MCF 10A (cell line): ENCODE measurements at regions of chr11 and their contacts with region 1.

Region 1: DNA sequence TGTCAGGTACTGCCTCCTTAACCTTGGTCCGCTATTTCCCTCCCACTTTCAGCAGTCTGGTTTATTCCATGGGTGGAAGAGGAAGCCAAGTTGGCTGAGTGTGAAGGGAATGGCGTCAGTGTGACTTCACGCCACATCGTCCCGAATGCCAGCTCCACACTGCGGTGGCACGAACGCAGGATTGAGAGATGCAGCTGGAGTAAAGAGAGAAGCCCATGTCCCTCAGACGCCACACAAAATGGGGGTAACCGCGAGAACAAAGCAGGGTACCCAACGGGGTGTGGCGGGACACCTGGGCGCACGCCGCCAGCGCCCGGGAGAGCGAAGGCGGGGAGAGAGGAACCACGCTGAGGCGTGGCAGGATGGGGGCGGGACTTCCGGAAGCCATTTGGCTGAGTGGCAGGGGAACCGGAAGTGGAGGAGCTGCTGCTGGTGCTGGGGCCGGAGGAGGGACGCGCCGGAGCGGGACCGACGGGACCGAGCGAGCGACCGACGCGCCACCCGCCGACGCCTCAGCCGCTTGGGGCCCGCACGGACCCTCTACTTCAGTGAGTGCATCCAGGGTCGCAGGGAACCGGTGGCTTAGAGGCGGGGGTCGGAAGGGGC is at the start of gene PAFAH1B2:
- DNase-seq: peak; percentile 94
- H3K4me3 Mint-ChIP-seq: peak within 1 kb of the TSS; percentile 96
- H3K27ac Mint-ChIP-seq: peak within 1 kb of the TSS; percentile 82
- H3K4me1 Mint-ChIP-seq: peaks cover 11% of the 10 kb centered on the region
- H3K27me3 Mint-ChIP-seq: no peaks in the 10 kb centered on the region
- CTCF ChIP-seq: no peak
- total RNA-seq, gene PAFAH1B2: 146 and 174 TPM in 2 replicates

Region 2: DNA sequence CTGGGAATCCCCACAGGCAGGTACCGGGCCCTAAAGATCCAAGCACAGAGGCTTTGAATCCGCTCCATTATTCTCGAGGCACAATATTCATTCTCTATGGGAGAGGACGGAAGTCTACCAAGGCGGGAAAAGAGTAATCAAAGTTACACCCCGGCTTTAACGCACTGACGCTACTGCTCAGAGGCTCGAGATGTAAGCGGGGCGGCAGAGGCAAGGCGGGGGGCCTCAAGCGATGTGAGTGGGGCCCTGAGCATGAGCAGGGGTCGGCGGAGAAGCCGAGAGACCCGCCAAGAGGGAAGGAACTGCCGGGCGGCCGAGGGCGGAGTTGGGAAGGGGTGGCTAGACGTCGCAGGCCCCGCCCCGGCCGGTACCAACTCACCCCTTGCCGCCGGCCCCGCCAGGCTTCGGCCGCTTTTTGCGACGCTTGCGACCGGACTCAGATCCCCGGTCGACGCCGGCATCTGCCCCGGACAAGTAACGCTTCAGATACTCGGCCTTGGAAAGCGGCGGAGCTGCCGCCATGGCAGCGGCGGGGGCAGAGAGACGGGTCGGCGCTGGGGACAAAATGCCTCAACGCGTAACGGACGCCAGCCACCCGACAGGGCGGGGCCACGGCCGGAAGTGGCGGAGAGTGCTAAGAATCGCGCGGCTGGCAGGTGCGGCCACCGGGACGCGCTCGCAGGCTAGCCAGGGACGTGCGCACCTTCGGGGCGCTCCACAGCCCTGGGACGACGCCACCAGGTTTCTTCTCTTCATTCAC is 371.4 kb before region 1 on chr11 and contains the start of gene BUD13:
- CTCF ChIA-PET with region 1: interaction called, 3 read pairs
- POLR2A ChIA-PET with region 1: interaction called, 17 read pairs
- intact Hi-C with region 1: no loop called
- DNase-seq: peak; percentile 86
- H3K4me3 Mint-ChIP-seq: peak within 1 kb of the TSS; percentile 97
- H3K27ac Mint-ChIP-seq: peak within 1 kb of the TSS; percentile 98
- H3K4me1 Mint-ChIP-seq: peaks cover 25% of the 10 kb centered on the region
- H3K27me3 Mint-ChIP-seq: no peaks in the 10 kb centered on the region
- CTCF ChIP-seq: no peak
- total RNA-seq, gene BUD13: 11.8 and 15.1 TPM in 2 replicates

Region 3: GRCh38 chr11:117072517-117073461 is 71.2 kb before region 1 on chr11:
- CTCF ChIA-PET with region 1: no interaction called
- POLR2A ChIA-PET with region 1: interaction called, 14 read pairs
- intact Hi-C with region 1: no loop called
- DNase-seq: peak; percentile 92
- H3K4me3 Mint-ChIP-seq: no peak overlapping the region
- H3K27ac Mint-ChIP-seq: no peak overlapping the region
- H3K4me1 Mint-ChIP-seq: peaks cover 26% of the 10 kb centered on the region
- H3K27me3 Mint-ChIP-seq: no peaks in the 10 kb centered on the region
- CTCF ChIP-seq: no peak

Region 4: DNA sequence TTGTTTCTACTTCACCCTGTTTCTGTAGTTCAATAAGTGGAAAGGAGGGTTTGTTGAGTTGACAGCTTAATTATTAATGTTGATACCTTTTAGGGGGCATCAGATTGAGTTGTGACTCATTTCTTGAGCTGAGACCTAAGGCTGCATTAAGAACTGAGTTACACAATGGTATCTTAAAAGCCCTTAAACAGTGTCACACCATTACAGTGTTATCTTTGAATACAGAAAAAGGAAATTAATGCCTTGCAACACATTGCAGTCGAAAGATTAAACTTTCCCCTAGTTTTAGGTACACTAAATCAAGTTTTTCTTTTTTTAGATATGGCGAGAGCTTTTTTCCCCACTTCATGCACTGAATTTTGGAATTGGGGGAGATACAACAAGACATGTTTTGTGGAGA is 16.9 kb after region 1 on chr11:
- CTCF ChIA-PET with region 1: interaction called, 6 read pairs
- POLR2A ChIA-PET with region 1: interaction called, 27 read pairs
- intact Hi-C with region 1: no loop called
- DNase-seq: no peak
- H3K4me3 Mint-ChIP-seq: no peak overlapping the region
- H3K27ac Mint-ChIP-seq: no peak overlapping the region
- H3K4me1 Mint-ChIP-seq: peaks cover 6% of the 10 kb centered on the region
- H3K27me3 Mint-ChIP-seq: no peaks in the 10 kb centered on the region
- CTCF ChIP-seq: no peak

Region 5: DNA sequence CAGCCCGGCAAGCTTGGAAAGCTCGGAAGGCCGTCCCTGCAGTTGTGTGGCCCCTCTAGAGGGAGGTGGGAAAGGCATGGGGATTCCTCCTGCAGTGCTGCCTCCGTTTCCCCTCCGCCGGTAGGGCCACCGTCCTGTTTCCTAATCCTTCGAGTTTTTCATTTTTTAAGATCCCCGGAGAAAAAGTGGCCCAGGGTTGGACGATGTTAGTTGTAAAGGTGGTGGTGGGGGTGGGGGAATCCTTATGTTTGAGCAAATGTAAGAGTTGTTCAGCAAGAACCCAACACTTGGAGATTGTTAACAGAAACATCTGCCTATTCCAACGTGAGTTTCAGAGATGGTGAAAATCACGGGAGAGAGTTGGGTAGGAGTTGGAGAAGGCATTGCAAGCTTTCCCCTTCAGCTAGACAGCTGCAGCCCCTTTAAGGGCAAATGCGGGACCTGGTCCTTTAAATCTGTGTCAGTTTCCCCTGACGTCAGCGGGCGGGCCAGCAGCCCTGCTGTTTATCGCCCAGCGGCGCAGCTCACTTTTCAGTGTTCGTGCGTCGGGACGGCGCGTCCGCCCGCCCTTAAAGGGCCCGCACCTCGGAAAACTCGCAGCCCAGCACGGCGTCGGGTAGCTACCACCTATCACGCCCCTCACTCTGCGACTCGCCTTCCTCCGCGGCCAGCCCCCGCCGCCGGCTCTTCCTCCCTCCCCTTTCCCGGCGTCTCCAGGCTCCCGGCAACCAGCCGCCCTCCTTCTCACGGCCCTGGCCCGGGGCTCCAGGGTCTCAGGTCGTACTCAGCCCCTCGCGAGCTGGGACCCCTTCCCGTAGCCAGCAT is 34.4 kb after region 1 on chr11 and contains the start of gene SIDT2:
- CTCF ChIA-PET with region 1: interaction called, 4 read pairs
- POLR2A ChIA-PET with region 1: interaction called, 83 read pairs
- intact Hi-C with region 1: no loop called
- DNase-seq: peak; percentile 91
- H3K4me3 Mint-ChIP-seq: peak within 1 kb of the TSS; percentile 90
- H3K27ac Mint-ChIP-seq: peak within 1 kb of the TSS; percentile 87
- H3K4me1 Mint-ChIP-seq: peaks cover 11% of the 10 kb centered on the region
- H3K27me3 Mint-ChIP-seq: no peaks in the 10 kb centered on the region
- CTCF ChIP-seq: no peak
- total RNA-seq, gene SIDT2: 17.5 and 18.4 TPM in 2 replicates